H1 (cell line): ENCODE measurements at regions of chr17 and their contacts with region 1.

Region 1: GRCh38 chr17:27532269-27533263 is 76.3 kb downstream of the KSR1 start:
- DNase-seq: no peak
- H3K4me3 ChIP-seq: no peak overlapping the region
- H3K27ac ChIP-seq: no peak overlapping the region
- H3K4me1 ChIP-seq: peaks cover 2 to 20% (median 8%) of the 10 kb centered on the region in 4 experiments
- H3K27me3 ChIP-seq: no peaks in the 10 kb centered on the region
- CTCF ChIP-seq: no peak
- EP300 ChIP-seq: no peak
- POLR2A ChIP-seq: no peak
- RAD21 ChIP-seq: no peak

Region 2: DNA sequence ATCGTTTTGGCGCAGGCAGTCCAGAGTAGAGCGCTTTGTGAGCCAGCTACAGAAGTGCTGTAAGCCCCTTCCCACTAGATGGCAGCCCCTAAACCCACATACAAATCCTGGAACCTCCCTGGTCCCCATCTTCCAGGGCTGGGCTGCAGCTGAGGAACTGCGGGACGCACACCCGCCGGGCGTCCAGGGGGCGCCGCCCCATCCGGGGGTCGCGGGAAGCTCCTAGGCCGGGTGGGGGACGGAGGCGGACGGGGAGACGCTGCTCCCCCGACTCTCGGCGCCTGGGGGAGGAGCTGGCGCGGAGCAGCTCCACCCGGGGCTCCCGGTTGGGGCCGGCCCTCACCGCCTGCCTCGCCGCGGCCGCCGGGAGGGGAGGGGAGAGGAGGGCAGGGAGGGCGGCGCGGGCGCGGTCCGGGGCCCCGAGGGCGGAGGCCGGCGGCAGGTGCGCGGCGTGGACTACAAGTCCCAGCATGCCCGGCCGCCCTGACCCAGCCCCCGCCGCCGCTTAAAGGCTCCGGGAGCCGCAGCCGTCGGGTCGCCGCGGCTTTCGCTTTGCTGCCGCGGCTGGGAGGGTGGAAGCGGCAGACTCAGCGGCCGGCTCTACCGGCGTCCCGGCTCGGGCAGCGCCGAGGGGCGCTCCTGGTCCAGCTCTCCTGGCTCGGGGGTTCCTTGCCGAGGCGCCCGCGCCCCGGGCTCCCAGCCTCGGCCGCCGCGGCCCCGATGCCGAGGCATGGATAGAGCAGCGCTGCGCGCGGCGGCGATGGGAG is 76.5 kb before region 1 on chr17 and contains the start of gene KSR1:
- CTCF ChIA-PET with region 1: interaction called, 10 read pairs
- POLR2A ChIA-PET with region 1: interaction called, 8 read pairs
- DNase-seq: peak; percentile 53 to 90
- H3K4me3 ChIP-seq: peak within 1 kb of the TSS; percentile 50 to 82 (median 65)
- H3K27ac ChIP-seq: peak within 1 kb of the TSS; percentile 65; the same call in 1 of the 2 replicates
- H3K4me1 ChIP-seq: peaks cover 2 to 30% (median 11%) of the 10 kb centered on the region in 4 experiments
- H3K27me3 ChIP-seq: peaks cover 0 to 9% (median 5%) of the 10 kb centered on the region in 4 experiments; a peak in 4 of 7 replicates
- CTCF ChIP-seq: peak; percentile 62 to 78 (median 67)
- EP300 ChIP-seq: no peak
- POLR2A ChIP-seq: peak in 1 of 2 experiments; percentile 58; a peak in 2 of 3 replicates
- RAD21 ChIP-seq: peak; percentile 71 to 79
- total RNA-seq, gene KSR1: 33.9 and 34.7 TPM in 2 replicates

Region 3: DNA sequence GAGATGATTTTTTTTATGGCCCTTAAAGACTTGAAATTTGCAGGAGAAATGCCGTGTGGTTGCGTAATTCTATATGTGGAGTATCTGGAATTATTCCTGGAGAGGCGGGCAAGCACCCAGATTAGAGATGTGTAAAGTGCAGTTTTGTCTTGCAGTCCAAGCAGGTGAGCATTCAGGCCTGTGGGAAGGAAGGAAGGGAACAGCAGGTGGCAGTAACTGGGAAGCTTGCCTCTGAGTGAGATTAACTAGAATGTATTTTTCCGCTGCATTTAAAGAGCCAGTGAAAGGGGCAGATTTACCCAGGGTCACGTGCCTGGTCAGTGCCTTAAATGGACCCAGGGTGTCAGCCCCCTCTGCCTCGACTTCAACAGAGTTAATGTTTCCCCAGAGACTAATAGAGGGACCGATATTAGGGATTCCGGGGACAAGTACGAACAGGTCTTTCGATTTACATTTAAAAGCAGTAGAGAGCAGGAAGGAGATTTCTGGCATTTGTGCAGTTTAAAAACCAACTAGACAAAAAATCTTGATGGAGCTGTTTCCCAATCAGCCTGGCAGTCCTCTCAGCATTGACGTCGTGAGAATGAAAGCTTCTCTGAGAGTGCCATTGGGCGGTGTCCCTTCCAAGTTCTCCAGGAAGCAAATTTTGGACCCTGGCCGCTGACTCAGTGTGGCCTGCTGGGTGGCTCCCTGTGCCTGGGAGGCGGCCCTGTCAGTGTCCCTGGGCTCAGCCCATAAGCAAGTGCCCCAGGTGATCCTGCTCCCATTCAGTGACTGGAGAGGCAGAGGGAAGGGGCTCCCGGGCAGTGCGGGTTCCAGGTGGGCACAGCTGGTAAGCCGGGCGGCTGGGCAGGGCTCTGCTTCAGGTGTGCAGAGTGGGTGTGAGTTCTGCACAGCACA is 38.1 kb before region 1 on chr17:
- CTCF ChIA-PET with region 1: interaction called, 23 read pairs
- POLR2A ChIA-PET with region 1: no interaction called
- DNase-seq: no peak
- H3K4me3 ChIP-seq: no peak overlapping the region; a peak in 1 of 8 replicates
- H3K27ac ChIP-seq: no peak overlapping the region
- H3K4me1 ChIP-seq: peaks cover 29 to 53% (median 41%) of the 10 kb centered on the region in 4 experiments
- H3K27me3 ChIP-seq: no peaks in the 10 kb centered on the region
- CTCF ChIP-seq: peak; percentile 28 to 44 (median 33)
- EP300 ChIP-seq: no peak
- POLR2A ChIP-seq: no peak
- RAD21 ChIP-seq: peak in 1 of 2 experiments; percentile 50; a peak in 2 of 4 replicates

Region 4: DNA sequence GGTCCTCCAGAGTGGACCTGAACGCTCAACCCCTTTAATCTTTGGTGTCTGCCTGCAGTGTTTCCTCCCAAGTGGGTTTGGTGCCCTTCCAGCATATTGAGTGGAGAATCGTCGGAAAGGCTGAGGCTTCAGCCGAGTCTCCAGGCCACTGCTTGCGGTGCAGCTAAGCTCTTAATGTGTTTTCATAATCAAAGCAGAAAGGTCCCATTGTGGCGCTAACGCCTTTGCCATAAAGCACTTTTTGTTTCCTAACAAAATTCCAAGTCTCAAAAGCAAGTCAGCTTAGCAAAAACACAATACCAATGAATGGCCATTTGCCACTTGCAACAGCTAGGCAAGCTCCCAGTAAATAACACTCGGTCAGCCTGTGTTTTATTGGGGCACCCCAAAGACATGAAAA is 18.7 kb before region 1 on chr17:
- CTCF ChIA-PET with region 1: interaction called, 20 read pairs
- POLR2A ChIA-PET with region 1: interaction called, 3 read pairs
- DNase-seq: no peak
- H3K4me3 ChIP-seq: no peak overlapping the region; a peak in 1 of 8 replicates
- H3K27ac ChIP-seq: peak overlapping the region; percentile 57
- H3K4me1 ChIP-seq: peaks cover 3 to 26% (median 17%) of the 10 kb centered on the region in 4 experiments
- H3K27me3 ChIP-seq: no peaks in the 10 kb centered on the region
- CTCF ChIP-seq: no peak
- EP300 ChIP-seq: no peak
- POLR2A ChIP-seq: no peak
- RAD21 ChIP-seq: no peak

Region 5: GRCh38 chr17:27519550-27519949 is 13.0 kb before region 1 on chr17:
- CTCF ChIA-PET with region 1: interaction called, 20 read pairs
- POLR2A ChIA-PET with region 1: interaction called, 3 read pairs
- DNase-seq: no peak
- H3K4me3 ChIP-seq: no peak overlapping the region
- H3K27ac ChIP-seq: no peak overlapping the region
- H3K4me1 ChIP-seq: peaks cover 7 to 28% (median 16%) of the 10 kb centered on the region in 4 experiments
- H3K27me3 ChIP-seq: no peaks in the 10 kb centered on the region
- CTCF ChIP-seq: no peak
- EP300 ChIP-seq: no peak
- POLR2A ChIP-seq: no peak
- RAD21 ChIP-seq: no peak

Region 6: DNA sequence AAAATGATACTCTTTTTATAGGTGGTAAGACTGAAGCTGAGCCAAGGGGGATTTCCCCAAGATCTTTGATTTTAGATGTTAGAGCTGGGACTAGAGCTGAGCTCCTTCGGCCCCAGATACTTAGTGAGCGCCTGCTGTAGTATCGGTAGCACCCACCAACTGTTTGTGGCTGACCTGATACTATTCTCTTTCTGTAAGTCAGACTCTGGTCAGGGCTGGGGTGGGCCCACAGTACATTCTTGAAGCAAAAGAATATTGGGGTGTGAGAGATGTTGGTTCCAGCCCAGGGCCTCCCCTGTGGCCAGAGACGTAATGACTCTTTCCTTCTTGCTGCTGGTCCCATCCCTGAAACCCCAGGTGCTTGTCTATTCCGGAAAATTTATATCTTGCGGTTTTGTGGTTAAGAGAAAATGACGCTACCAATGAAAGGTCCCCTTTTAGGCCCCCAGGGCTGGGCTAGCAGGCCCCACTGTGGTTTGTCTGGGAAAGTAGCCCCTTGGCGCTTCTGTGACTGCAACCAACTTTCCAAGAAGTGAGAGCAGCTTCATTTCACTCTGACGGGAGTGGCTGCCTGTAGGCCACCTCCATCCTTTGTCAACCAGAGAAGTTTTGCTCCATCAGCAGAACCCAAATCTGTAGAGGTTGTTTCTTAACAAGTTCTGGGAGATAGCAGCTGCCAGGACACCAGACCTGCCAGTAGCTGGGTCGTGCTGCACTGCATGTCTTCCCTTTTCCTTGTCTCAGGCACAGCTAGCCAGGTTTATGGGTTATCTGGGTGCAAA is 12.0 kb after region 1 on chr17:
- CTCF ChIA-PET with region 1: interaction called, 52 read pairs
- POLR2A ChIA-PET with region 1: no interaction called
- DNase-seq: no peak
- H3K4me3 ChIP-seq: no peak overlapping the region
- H3K27ac ChIP-seq: no peak overlapping the region
- H3K4me1 ChIP-seq: peaks cover 0 to 4% (median 2%) of the 10 kb centered on the region in 4 experiments; a peak in 5 of 7 replicates
- H3K27me3 ChIP-seq: no peaks in the 10 kb centered on the region
- CTCF ChIP-seq: no peak
- EP300 ChIP-seq: no peak
- POLR2A ChIP-seq: no peak
- RAD21 ChIP-seq: no peak